Calu3 (cell line): ENCODE measurements at regions of chr1 and their contacts with region 1.

Region 1: DNA sequence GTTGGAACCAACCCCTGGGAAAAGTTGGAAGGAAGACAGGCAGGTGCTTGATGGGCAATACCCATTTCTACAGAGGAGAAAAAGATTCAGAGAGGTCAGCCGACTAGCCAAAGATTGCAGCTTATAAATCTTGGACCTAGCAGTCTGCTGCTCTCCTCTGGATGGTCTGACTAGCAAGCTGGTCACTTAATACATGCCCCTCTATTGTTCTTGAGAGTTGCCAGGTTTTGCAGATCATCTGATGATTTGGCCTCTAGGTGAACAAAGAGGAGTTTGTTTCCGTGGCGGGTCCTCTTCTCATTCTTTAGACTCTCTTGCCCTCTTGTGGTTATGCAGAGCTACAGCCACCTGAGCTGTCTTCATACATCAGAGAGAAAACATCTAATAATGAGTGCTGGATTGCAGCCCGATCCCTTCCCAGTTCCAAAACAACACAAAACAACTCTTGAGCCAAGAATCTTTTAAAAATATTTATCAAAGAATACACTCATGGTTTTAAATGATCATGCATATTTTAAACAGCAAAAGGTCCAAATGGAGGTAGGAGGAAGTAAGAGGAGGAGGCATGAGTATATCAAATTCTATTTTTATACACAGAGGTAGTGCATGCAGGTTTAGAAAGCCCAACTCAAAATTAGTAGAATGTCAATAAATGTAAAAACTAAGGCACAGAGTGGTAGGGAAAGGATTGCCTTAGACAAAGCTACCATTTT is 115.7 kb downstream of the SLC30A10 start:
- DNase-seq: peak; percentile 68
- H3K4me3 Mint-ChIP-seq: no peak overlapping the region
- H3K27ac Mint-ChIP-seq: no peak overlapping the region
- H3K4me1 Mint-ChIP-seq: no peaks in the 10 kb centered on the region
- H3K27me3 Mint-ChIP-seq: peaks cover 21% of the 10 kb centered on the region
- CTCF ChIP-seq: peak; percentile 84

Region 2: DNA sequence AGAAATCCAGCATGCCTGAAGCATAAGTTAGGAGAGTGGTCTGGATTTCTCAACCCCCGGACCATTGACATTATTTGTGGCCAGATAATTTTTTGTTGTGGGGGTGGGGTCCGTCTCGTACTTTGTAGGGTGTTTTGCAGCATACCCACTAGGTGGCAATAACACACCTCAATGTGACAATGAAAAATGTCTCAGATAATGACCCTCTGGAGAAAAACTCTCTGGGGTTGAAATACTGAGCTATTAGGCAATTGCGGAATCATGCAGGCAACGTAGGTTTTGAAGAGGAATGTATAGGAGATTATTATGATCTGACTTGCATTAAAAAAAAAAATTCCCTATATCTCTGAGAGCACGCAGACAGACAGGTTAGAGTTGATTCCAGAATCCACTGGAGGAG is 1552.8 kb before region 1 on chr1:
- CTCF ChIA-PET with region 1: no interaction called
- intact Hi-C with region 1: loop called (anchors 2 kb)
- DNase-seq: peak; percentile 59
- H3K4me3 Mint-ChIP-seq: peak overlapping the region; percentile 9
- H3K27ac Mint-ChIP-seq: no peak overlapping the region
- H3K4me1 Mint-ChIP-seq: peaks cover 16% of the 10 kb centered on the region
- H3K27me3 Mint-ChIP-seq: no peaks in the 10 kb centered on the region
- CTCF ChIP-seq: peak; percentile 61

Region 3: GRCh38 chr1:219088778-219089557 is 723.7 kb before region 1 on chr1:
- CTCF ChIA-PET with region 1: interaction called, 3 read pairs
- intact Hi-C with region 1: loop called (anchors 10 kb)
- DNase-seq: peak; percentile 84
- H3K4me3 Mint-ChIP-seq: peak overlapping the region; percentile 33
- H3K27ac Mint-ChIP-seq: peak overlapping the region; percentile 93
- H3K4me1 Mint-ChIP-seq: peaks cover 40% of the 10 kb centered on the region
- H3K27me3 Mint-ChIP-seq: no peaks in the 10 kb centered on the region
- CTCF ChIP-seq: no peak

Region 4: GRCh38 chr1:219416594-219417238 is 395.9 kb before region 1 on chr1:
- CTCF ChIA-PET with region 1: no interaction called
- intact Hi-C with region 1: loop called (anchors 10 kb)
- DNase-seq: peak; percentile 80
- H3K4me3 Mint-ChIP-seq: no peak overlapping the region
- H3K27ac Mint-ChIP-seq: no peak overlapping the region
- H3K4me1 Mint-ChIP-seq: peaks cover 20% of the 10 kb centered on the region
- H3K27me3 Mint-ChIP-seq: no peaks in the 10 kb centered on the region
- CTCF ChIP-seq: peak; percentile 84

Region 5: GRCh38 chr1:219582296-219582695 is 230.4 kb before region 1 on chr1:
- CTCF ChIA-PET with region 1: no interaction called
- intact Hi-C with region 1: loop called (anchors 5 kb)
- DNase-seq: no peak
- H3K4me3 Mint-ChIP-seq: no peak overlapping the region
- H3K27ac Mint-ChIP-seq: no peak overlapping the region
- H3K4me1 Mint-ChIP-seq: peaks cover 10% of the 10 kb centered on the region
- H3K27me3 Mint-ChIP-seq: no peaks in the 10 kb centered on the region
- CTCF ChIP-seq: no peak